K562 (cell line): ENCODE measurements at regions of chr11 and their contacts with region 1.

Region 1: GRCh38 chr11:45834298-45834756 is 12.9 kb upstream of the CRY2 start:
- DNase-seq: peak in 2 of 4 experiments; percentile 81 to 95
- ATAC-seq: peak; percentile 95
- H3K4me3 ChIP-seq: peak overlapping the region; percentile 14
- H3K27ac ChIP-seq: peak overlapping the region; percentile 45; the same call in 2 of the 3 replicates
- H3K4me1 ChIP-seq: peaks cover 12 to 15% of the 10 kb centered on the region in 2 experiments; a peak in 4 of 5 replicates
- H3K27me3 ChIP-seq: no peaks in the 10 kb centered on the region
- CTCF ChIP-seq: no peak
- EP300 ChIP-seq: peak; percentile 83
- POLR2A ChIP-seq: 0 out of 2 replicates have a peak, but pooled peaks have one; percentile 27
- RAD21 ChIP-seq: peak; percentile 6 to 36; a peak in 2 of 4 replicates

Region 2: DNA sequence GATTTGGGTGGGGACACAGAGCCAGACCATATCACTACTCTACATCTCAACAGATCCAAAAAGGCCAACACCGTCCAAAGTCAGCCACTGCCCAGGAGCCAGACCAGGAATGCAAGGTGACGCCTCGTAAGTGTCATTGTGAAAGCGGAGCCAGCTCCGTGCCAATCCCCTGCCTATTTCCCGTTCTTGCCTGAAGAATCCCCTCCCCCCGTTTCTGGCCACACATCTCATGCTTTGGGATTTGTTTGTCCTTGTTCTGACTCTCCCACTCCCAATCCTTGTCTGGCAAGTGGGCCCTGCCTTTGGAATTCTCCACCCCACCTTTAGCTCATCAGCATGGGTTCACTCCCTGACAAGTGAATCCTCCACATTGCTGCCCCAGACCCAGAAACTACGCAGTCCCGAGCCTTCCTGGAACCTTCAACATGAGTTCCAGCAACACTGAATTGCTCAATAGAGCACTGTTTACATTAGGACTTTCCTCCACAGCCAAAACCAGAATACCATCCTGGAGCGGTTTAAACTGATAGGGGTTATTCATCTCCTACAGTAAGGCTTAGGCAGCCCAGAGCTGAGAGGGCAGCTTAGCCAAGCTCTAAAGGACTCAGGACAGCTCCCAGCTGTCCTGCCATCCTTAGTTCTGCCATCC is 35.4 kb before region 1 on chr11:
- CTCF ChIA-PET with region 1: no interaction called
- POLR2A ChIA-PET with region 1: no interaction called
- in situ Hi-C with region 1: no loop called
- intact Hi-C with region 1: loop called (anchors 5 kb)
- DNase-seq: no peak
- ATAC-seq: no peak
- H3K4me3 ChIP-seq: no peak overlapping the region
- H3K27ac ChIP-seq: no peak overlapping the region
- H3K4me1 ChIP-seq: peaks cover 0 to 3% of the 10 kb centered on the region in 2 experiments; a peak in 2 of 5 replicates
- H3K27me3 ChIP-seq: peaks cover 6 to 10% of the 10 kb centered on the region in 2 experiments; a peak in 2 of 5 replicates
- CTCF ChIP-seq: no peak
- EP300 ChIP-seq: no peak
- POLR2A ChIP-seq: no peak
- RAD21 ChIP-seq: no peak